K562 (cell line): ENCODE measurements at regions of chr1 and their contacts with region 1.

Region 1: DNA sequence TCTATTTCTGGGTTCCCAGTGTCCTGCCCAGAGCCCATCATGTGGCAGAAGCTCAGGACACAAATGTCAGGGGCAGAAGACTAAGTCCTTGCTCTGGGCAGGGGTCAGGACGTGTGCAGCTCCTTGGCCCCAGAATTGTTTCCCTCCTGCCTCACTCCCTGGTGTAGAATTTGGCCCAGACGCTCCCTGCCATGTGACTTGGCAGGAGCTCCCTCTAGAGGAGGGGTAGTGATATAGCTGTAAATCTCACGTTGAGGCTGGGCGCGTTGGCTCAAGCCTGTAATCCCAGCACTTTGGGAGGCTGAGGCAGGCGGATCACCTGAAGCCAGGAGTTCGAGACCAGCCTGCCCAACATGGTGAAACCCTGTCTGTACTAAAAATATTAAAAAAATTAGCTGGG is 91.2 kb downstream of the UBIAD1 start:
- DNase-seq: peak; percentile 65 to 72 (median 67)
- ATAC-seq: peak; percentile 88
- H3K4me3 ChIP-seq: no peak overlapping the region
- H3K27ac ChIP-seq: no peak overlapping the region
- H3K4me1 ChIP-seq: peaks cover 0 to 3% of the 10 kb centered on the region in 2 experiments; a peak in 1 of 5 replicates
- H3K27me3 ChIP-seq: peaks cover 16 to 53% of the 10 kb centered on the region in 2 experiments
- CTCF ChIP-seq: peak; percentile 74 to 81 (median 80)
- EP300 ChIP-seq: no peak
- POLR2A ChIP-seq: no peak
- RAD21 ChIP-seq: peak; percentile 37 to 81

Region 2: GRCh38 chr1:11320153-11320936 is 43.8 kb before region 1 on chr1:
- CTCF ChIA-PET with region 1: no interaction called
- POLR2A ChIA-PET with region 1: no interaction called
- in situ Hi-C with region 1: no loop called
- intact Hi-C with region 1: loop called (anchors 5 kb)
- DNase-seq: peak; percentile 47 to 64 (median 62)
- ATAC-seq: peak; percentile 71
- H3K4me3 ChIP-seq: no peak overlapping the region
- H3K27ac ChIP-seq: no peak overlapping the region
- H3K4me1 ChIP-seq: peaks cover 0 to 11% of the 10 kb centered on the region in 2 experiments; a peak in 2 of 5 replicates
- H3K27me3 ChIP-seq: peaks cover 38 to 63% of the 10 kb centered on the region in 2 experiments
- CTCF ChIP-seq: peak; percentile 64 to 82 (median 64)
- EP300 ChIP-seq: no peak
- POLR2A ChIP-seq: no peak
- RAD21 ChIP-seq: peak in 1 of 2 experiments; percentile 54; a peak in 2 of 4 replicates

Region 3: DNA sequence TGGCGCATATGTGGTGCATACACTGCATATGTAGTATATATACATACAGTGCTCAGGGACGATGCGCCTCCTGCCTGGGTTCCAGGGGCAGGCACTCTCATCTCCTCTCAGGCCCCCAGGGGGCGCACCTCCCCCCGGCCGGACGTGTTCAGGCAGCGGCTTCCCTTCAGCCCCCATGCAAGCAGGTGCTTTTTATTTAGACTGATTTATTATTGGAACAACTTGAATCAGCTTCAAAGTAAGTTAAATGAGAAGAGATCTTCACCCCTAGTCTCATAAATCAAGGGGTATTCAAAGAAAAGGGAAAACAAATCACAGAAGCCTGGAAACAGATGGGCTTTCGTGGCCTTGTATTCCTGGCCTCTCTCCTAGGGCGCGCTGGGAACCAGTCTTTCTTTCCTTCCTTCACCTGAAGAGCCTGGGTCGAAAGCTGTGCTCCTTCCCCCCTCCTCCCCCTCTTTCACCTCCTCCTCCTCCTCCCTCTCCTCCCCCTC is 26.5 kb before region 1 on chr1:
- CTCF ChIA-PET with region 1: no interaction called
- POLR2A ChIA-PET with region 1: interaction called, 3 read pairs
- in situ Hi-C with region 1: no loop called
- intact Hi-C with region 1: loop called (anchors 1 kb)
- DNase-seq: peak; percentile 78 to 93 (median 88)
- ATAC-seq: peak; percentile 93
- H3K4me3 ChIP-seq: no peak overlapping the region
- H3K27ac ChIP-seq: no peak overlapping the region
- H3K4me1 ChIP-seq: peaks cover 0 to 3% of the 10 kb centered on the region in 2 experiments; a peak in 1 of 5 replicates
- H3K27me3 ChIP-seq: peaks cover 42 to 82% of the 10 kb centered on the region in 2 experiments
- CTCF ChIP-seq: peak; percentile 89 to 98 (median 93)
- EP300 ChIP-seq: no peak
- POLR2A ChIP-seq: no peak
- RAD21 ChIP-seq: peak; percentile 39 to 71